CD8-positive, alpha-beta T cell (primary cell): ENCODE measurements at regions of chr5 and their contacts with region 1.

Region 1: DNA sequence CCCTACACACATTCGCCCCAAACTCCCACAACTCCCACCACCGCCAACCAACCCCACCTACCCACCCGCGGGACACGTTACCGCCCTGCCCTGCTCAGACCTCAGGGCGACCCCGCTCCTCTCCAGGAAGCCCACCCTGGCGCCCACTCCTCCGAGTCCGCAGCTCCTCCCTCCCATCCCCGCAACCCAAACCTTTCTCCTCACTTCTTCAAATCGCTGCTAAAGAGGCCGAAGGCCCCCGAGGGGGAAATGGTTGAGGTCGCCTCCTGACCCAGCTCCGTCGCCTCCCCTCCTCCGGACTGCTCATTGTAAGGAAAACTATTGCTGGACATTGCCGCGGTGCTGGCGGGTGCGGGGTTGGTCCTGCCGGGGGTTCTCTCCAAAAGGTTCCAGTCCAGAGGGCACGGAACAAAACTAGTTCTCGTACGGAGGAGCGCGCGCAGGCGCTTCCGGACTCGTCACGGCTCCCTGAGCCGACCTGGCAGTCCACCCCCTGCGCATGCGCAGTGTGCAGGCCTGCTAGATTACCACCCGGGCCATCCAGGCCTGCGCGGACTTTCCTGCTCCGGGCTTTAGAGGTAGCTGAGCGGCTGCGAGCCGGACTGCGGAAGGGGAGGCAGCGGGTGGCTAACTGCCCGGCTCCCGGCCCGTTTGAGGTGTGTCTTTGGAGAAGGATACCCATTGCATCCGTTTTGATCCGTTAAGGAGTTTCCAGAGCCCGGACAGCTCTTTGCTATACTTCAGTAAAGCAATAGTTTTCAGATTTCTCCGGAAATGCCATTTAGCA is at the start of gene AP3B1:
- DNase-seq: peak; percentile 92 to 99 (median 98)
- ATAC-seq: peak; percentile 90
- H3K4me3 ChIP-seq: peak within 1 kb of the TSS; percentile 70 to 99
- H3K4me3 Mint-ChIP-seq: peak within 1 kb of the TSS; percentile 99
- H3K27ac ChIP-seq: peak within 1 kb of the TSS; percentile 88 to 90
- H3K27ac Mint-ChIP-seq: peak within 1 kb of the TSS; percentile 98
- H3K4me1 ChIP-seq: peaks cover 30% of the 10 kb centered on the region
- H3K4me1 Mint-ChIP-seq: peaks cover 39% of the 10 kb centered on the region
- H3K27me3 ChIP-seq: peaks cover 0 to 2% of the 10 kb centered on the region in 2 experiments
- H3K27me3 Mint-ChIP-seq: no peaks in the 10 kb centered on the region
- CTCF ChIP-seq: no peak
- total RNA-seq, gene AP3B1: 24.8 to 25.0 TPM

Region 2: GRCh38 chr5:76393035-76393680 is 1901.3 kb before region 1 on chr5:
- CTCF ChIA-PET with region 1: no interaction called
- POLR2A ChIA-PET with region 1: no interaction called
- intact Hi-C with region 1: loop called in 1 of 2 experiments (anchors 5 kb)
- DNase-seq: peak in 6 of 9 experiments; percentile 19 to 62 (median 32)
- ATAC-seq: peak; percentile 84
- H3K4me3 ChIP-seq: no peak overlapping the region
- H3K4me3 Mint-ChIP-seq: peak overlapping the region; percentile 23
- H3K27ac ChIP-seq: peak overlapping the region in 1 of 2 experiments; percentile 51
- H3K27ac Mint-ChIP-seq: peak overlapping the region; percentile 69
- H3K4me1 ChIP-seq: peaks cover 58% of the 10 kb centered on the region
- H3K4me1 Mint-ChIP-seq: peaks cover 65% of the 10 kb centered on the region
- H3K27me3 ChIP-seq: no peaks in the 10 kb centered on the region
- H3K27me3 Mint-ChIP-seq: no peaks in the 10 kb centered on the region
- CTCF ChIP-seq: no peak

Region 3: DNA sequence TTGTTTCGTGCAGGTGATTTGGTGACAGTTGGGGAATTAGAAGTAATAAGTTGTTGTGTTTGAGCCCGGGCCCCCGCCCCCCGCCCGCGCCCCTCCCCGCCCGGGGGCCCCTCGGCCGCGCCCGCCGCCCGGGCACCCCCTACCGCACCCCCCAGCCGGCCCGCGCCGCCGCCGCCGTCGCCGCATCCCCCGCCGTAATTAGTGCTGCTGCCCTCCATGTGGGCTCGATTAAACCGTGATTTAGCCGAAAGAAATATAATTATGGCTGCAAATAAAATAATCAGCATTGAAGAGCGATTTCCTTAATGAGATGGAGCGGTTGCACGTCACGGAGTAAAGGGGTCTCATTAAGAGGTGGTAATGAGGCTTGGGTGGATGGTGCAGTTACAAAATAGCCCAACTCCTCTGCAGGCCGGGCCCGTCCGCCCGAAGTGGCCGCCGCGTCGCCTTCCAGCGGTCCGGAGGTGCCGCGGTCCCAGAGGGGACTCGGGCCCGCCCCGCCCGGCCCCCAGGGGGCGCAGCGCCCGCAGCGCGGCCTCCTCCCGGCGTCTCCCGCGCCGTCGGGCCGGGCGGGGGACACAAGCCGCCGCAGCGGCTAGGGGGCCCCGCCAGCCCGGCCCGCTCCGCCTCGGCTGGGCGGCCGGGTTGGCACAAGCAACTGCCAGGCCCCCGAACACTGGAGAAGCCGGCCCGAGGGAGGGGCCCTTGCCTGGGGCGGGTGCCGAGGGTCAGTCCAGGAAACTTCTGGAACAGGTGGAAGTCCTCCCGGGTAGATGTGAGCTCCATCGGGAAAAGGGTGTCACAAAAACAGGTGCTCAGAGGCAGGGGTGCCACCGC is 649.1 kb before region 1 on chr5:
- CTCF ChIA-PET with region 1: no interaction called
- POLR2A ChIA-PET with region 1: no interaction called
- intact Hi-C with region 1: loop called in 1 of 2 experiments (anchors 10 kb)
- DNase-seq: peak in 6 of 9 experiments; percentile 16 to 62 (median 48)
- ATAC-seq: peak; percentile 78
- H3K4me3 ChIP-seq: peak overlapping the region; percentile 25 to 36
- H3K4me3 Mint-ChIP-seq: peak overlapping the region; percentile 60
- H3K27ac ChIP-seq: no peak overlapping the region
- H3K27ac Mint-ChIP-seq: no peak overlapping the region
- H3K4me1 ChIP-seq: peaks cover 15% of the 10 kb centered on the region
- H3K4me1 Mint-ChIP-seq: peaks cover 22% of the 10 kb centered on the region
- H3K27me3 ChIP-seq: peaks cover 50 to 58% of the 10 kb centered on the region in 2 experiments
- H3K27me3 Mint-ChIP-seq: peaks cover 82% of the 10 kb centered on the region
- CTCF ChIP-seq: no peak

Region 4: GRCh38 chr5:78359831-78360673 is 65.6 kb after region 1 on chr5 and contains the start of gene SCAMP1:
- CTCF ChIA-PET with region 1: interaction called, 36 read pairs
- POLR2A ChIA-PET with region 1: interaction called, 107 read pairs
- intact Hi-C with region 1: loop called (anchors 1 kb)
- DNase-seq: peak; percentile 88 to 96 (median 91)
- ATAC-seq: peak; percentile 78
- H3K4me3 ChIP-seq: peak within 1 kb of the TSS; percentile 95
- H3K4me3 Mint-ChIP-seq: peak within 1 kb of the TSS; percentile 86
- H3K27ac ChIP-seq: peak within 1 kb of the TSS; percentile 92 to 97
- H3K27ac Mint-ChIP-seq: peak within 1 kb of the TSS; percentile 96
- H3K4me1 ChIP-seq: peaks cover 27% of the 10 kb centered on the region
- H3K4me1 Mint-ChIP-seq: peaks cover 53% of the 10 kb centered on the region
- H3K27me3 ChIP-seq: no peaks in the 10 kb centered on the region
- H3K27me3 Mint-ChIP-seq: no peaks in the 10 kb centered on the region
- CTCF ChIP-seq: no peak
- total RNA-seq, gene SCAMP1: 19.2 to 20.3 TPM

Region 5: DNA sequence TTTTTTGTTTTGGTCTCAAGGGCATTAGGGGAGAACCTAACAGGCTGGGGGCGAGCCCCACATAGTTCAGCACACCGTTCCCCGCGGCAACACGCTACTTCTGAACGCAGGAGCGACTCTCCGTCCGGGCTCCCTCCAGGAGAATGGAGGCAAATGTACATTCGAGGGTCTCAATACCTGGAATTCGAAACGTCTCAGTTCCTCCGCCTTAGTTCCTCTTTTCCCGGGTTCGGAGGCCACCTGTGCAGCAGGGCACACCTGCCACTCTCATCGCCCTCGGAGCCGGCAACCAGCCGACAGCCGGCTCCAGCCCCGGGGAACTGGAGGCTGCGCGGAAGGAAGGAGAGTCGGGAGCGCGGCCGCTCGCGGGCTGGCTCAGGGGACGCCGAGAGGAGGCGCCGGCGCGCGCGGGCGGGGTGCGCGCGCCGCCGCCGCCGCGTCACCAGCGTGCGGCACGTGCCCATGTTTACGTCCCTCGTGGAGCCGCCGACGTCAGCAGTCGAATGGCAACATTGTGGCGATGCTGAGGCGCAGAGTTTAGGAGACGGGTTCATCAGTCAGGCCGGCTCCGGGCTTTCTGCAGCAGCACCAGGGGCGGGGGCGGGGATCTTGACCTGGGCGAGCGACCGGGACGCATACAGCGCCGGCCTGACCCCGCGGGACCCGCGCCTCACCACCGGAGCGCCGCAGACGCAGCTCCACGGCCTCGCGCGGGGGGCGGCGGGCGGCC is 941.4 kb after region 1 on chr5 and contains the start of gene JMY:
- CTCF ChIA-PET with region 1: no interaction called
- POLR2A ChIA-PET with region 1: interaction called, 5 read pairs
- intact Hi-C with region 1: loop called in 1 of 2 experiments (anchors 10 kb)
- DNase-seq: peak; percentile 72 to 94 (median 85)
- ATAC-seq: peak; percentile 86
- H3K4me3 ChIP-seq: peak within 1 kb of the TSS; percentile 79 to 81
- H3K4me3 Mint-ChIP-seq: peak within 1 kb of the TSS; percentile 97
- H3K27ac ChIP-seq: peak within 1 kb of the TSS; percentile 91 to 98
- H3K27ac Mint-ChIP-seq: peak within 1 kb of the TSS; percentile 96
- H3K4me1 ChIP-seq: peaks cover 28% of the 10 kb centered on the region
- H3K4me1 Mint-ChIP-seq: peaks cover 34% of the 10 kb centered on the region
- H3K27me3 ChIP-seq: no peaks in the 10 kb centered on the region
- H3K27me3 Mint-ChIP-seq: no peaks in the 10 kb centered on the region
- CTCF ChIP-seq: no peak
- total RNA-seq, gene JMY: 104 TPM